ENCODE measurements at regions of chr20 and their contacts with region 1.

Region 1: DNA sequence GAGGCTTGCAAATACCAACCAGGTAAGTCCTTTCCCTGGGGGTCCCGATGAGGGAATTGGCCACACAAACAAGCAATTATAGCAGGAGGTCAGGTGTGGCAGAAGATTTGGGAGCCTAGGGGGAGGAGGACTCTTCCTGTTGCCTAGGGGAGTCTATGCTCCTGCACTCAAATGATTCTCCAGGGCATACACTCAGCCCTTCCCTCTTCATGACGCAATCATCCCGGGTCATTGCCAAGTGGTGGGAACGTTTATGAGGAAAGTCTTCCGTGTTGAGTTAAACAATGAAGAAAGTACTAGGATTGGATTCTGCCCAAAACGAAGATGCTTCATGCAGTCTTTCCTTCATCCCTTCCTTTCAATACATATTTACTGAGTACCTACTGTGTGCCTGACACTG is 186.5 kb upstream of the TSHZ2 start:
- DNase-seq: no peak
- ATAC-seq: no peak
- H3K4me3 ChIP-seq: no peak overlapping the region
- H3K27ac ChIP-seq: no peak overlapping the region
- H3K4me1 ChIP-seq: no peaks in the 10 kb centered on the region
- H3K27me3 ChIP-seq: peaks cover 13% of the 10 kb centered on the region; the same call in 1 of the 2 replicates
- CTCF ChIP-seq: no peak

Region 2: GRCh38 chr20:52643034-52643433 is 142.6 kb before region 1 on chr20:
- CTCF ChIA-PET with region 1: no interaction called
- POLR2A ChIA-PET with region 1: no interaction called
- intact Hi-C with region 1: loop called (anchors 5 kb)
- DNase-seq: no peak
- ATAC-seq: no peak
- H3K4me3 ChIP-seq: no peak overlapping the region
- H3K27ac ChIP-seq: no peak overlapping the region
- H3K4me1 ChIP-seq: no peaks in the 10 kb centered on the region
- H3K27me3 ChIP-seq: no peaks in the 10 kb centered on the region
- CTCF ChIP-seq: no peak

Measured in PC-3 (cell line).